Activated CD4-positive, alpha-beta T cell treated with anti-CD3 and anti-CD28 coated beads for 36 hours (primary cell): ENCODE measurements at regions of chr15 and their contacts with region 1.

Region 1: DNA sequence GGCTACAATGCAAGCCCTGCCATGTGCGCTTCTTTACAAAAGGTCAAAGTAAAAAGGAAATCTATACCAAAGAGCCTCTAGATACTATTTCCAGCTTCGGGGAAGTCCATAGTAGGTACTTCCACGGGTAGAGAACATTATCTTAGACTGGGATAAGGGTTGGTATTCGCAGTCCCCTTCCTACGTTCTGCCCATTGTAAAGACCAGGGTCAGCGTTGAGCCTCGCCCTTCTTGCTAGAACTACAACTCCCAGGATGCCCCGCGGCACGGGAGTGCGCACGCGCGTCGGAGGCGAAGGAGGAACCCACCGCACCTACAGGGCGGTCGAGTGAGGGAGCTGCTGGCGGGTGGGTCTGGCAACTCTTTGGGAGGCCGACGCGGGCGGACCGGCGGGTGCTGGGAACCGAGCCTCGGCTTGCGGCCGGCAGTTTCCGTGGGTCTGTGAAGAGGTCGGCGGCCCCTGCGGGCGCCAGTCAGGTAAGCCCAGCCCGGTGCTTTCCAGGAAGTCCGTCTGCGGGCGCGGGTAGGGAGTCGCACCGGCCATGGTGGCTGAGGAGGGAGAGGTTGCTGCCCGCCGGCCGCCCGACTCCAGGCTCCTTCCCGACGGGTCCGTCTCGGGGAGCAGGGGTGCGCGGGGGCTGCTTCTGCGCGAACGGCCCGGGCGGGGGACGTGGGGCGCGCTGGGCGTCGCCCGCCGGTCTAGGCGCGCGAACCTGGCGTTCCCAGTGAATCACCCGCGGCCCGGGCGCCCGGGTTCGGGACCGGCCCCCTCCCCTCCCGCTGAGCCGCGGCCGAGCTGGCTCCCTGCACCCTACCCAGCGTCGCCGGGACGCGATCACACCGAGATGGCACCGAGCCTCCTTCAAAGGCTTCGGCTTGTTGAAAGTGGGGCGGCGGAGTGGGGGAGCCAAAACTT is at the start of gene TMOD3:
- DNase-seq: peak; percentile 93
- ATAC-seq: peak; percentile 81
- H3K4me3 Mint-ChIP-seq: peak within 1 kb of the TSS; percentile 84
- H3K27ac Mint-ChIP-seq: peak within 1 kb of the TSS; percentile 89
- H3K4me1 Mint-ChIP-seq: peaks cover 46% of the 10 kb centered on the region
- H3K27me3 Mint-ChIP-seq: no peaks in the 10 kb centered on the region
- total RNA-seq, gene TMOD3: 52.4 to 55.7 TPM

Region 2: GRCh38 chr15:50686468-50687301 is 1142.9 kb before region 1 on chr15 and contains the start of gene TRPM7:
- CTCF ChIA-PET with region 1: no interaction called
- POLR2A ChIA-PET with region 1: no interaction called
- intact Hi-C with region 1: loop called in 1 of 2 experiments (anchors 10 kb)
- DNase-seq: peak; percentile 95
- ATAC-seq: peak; percentile 79
- H3K4me3 Mint-ChIP-seq: peak within 1 kb of the TSS; percentile 99
- H3K27ac Mint-ChIP-seq: peak within 1 kb of the TSS; percentile 97
- H3K4me1 Mint-ChIP-seq: peaks cover 49% of the 10 kb centered on the region
- H3K27me3 Mint-ChIP-seq: no peaks in the 10 kb centered on the region
- total RNA-seq, gene TRPM7: 40.7 to 41.4 TPM

Region 3: GRCh38 chr15:51750792-51751685 is 78.6 kb before region 1 on chr15 and contains the start of gene TMOD2:
- CTCF ChIA-PET with region 1: no interaction called
- POLR2A ChIA-PET with region 1: no interaction called
- intact Hi-C with region 1: loop called in 1 of 2 experiments (anchors 5 kb)
- DNase-seq: peak; percentile 72
- ATAC-seq: peak; percentile 90
- H3K4me3 Mint-ChIP-seq: peak within 1 kb of the TSS; percentile 79
- H3K27ac Mint-ChIP-seq: peak within 1 kb of the TSS; percentile 66
- H3K4me1 Mint-ChIP-seq: peaks cover 24% of the 10 kb centered on the region
- H3K27me3 Mint-ChIP-seq: peaks cover 11% of the 10 kb centered on the region
- total RNA-seq, gene TMOD2: 5.4 to 6.9 TPM

Region 4: GRCh38 chr15:51861557-51862359 is 32.1 kb after region 1 on chr15:
- CTCF ChIA-PET with region 1: interaction called, 3 read pairs
- POLR2A ChIA-PET with region 1: no interaction called
- intact Hi-C with region 1: loop called (anchors 2 kb)
- DNase-seq: peak; percentile 77
- ATAC-seq: peak; percentile 84
- H3K4me3 Mint-ChIP-seq: peak overlapping the region; percentile 51
- H3K27ac Mint-ChIP-seq: peak overlapping the region; percentile 75
- H3K4me1 Mint-ChIP-seq: peaks cover 65% of the 10 kb centered on the region
- H3K27me3 Mint-ChIP-seq: no peaks in the 10 kb centered on the region

Region 5: GRCh38 chr15:51971375-51972133 is 141.9 kb after region 1 on chr15 and contains the start of gene LEO1:
- CTCF ChIA-PET with region 1: no interaction called
- POLR2A ChIA-PET with region 1: no interaction called
- intact Hi-C with region 1: loop called in 1 of 2 experiments (anchors 1 kb)
- DNase-seq: peak; percentile 93
- ATAC-seq: peak; percentile 95
- H3K4me3 Mint-ChIP-seq: peak within 1 kb of the TSS; percentile 100
- H3K27ac Mint-ChIP-seq: peak within 1 kb of the TSS; percentile 94
- H3K4me1 Mint-ChIP-seq: peaks cover 21% of the 10 kb centered on the region
- H3K27me3 Mint-ChIP-seq: no peaks in the 10 kb centered on the region
- total RNA-seq, gene LEO1: 31.4 to 40.0 TPM

Region 6: DNA sequence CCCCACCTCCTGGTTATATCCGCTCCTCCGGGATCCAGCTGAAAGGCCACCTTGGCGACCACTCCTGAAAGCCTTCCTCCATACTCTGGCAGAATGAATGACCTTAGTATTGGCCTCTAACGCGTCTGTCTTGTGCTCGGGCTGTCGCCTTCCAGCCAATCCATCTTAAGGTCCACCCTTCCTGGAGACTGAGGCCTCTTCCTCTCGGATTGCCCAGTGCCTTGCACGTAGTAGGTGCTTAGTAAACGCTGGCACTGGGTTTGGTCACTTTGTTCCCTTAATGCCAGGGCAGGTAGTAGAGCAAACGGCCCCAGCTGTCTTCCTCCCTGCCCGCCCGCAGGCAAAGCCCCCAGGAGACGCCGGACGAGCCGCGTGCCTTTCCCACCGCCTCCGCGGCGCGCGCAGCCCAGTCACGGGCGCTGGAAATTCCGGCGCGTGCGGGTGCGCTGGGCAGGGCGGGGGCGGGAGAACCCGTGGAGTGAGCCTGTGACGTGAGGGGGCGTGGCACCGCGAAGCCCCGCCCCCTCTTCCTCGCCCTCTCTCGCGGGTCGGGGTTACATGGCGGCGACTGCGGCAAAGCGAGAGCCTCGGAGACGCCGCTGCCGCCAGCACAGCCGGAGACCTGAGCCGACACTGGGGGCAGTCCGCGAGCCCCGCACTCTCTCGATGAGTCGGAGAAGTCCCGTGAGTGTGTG is 189.2 kb after region 1 on chr15 and contains the start of gene MAPK6:
- CTCF ChIA-PET with region 1: no interaction called
- POLR2A ChIA-PET with region 1: no interaction called
- intact Hi-C with region 1: loop called in 1 of 2 experiments (anchors 5 kb)
- DNase-seq: peak; percentile 97
- ATAC-seq: peak; percentile 76
- H3K4me3 Mint-ChIP-seq: peak within 1 kb of the TSS; percentile 86
- H3K27ac Mint-ChIP-seq: peak within 1 kb of the TSS; percentile 96
- H3K4me1 Mint-ChIP-seq: peaks cover 38% of the 10 kb centered on the region
- H3K27me3 Mint-ChIP-seq: peaks cover 5% of the 10 kb centered on the region
- total RNA-seq, gene MAPK6: 27.3 to 28.1 TPM

Region 7: GRCh38 chr15:52112203-52112750 is 282.7 kb after region 1 on chr15:
- CTCF ChIA-PET with region 1: no interaction called
- POLR2A ChIA-PET with region 1: no interaction called
- intact Hi-C with region 1: no loop called
- DNase-seq: peak; percentile 67
- ATAC-seq: peak; percentile 88
- H3K4me3 Mint-ChIP-seq: peak overlapping the region; percentile 54
- H3K27ac Mint-ChIP-seq: no peak overlapping the region
- H3K4me1 Mint-ChIP-seq: peaks cover 12% of the 10 kb centered on the region
- H3K27me3 Mint-ChIP-seq: peaks cover 16% of the 10 kb centered on the region